T-cell (primary cell): ENCODE measurements at regions of chr5 and their contacts with region 1.

Region 1: GRCh38 chr5:146448783-146449519 is 1.8 kb downstream of the TCERG1 start:
- DNase-seq: no peak
- ATAC-seq: no peak
- H3K4me3 ChIP-seq: no peak overlapping the region
- H3K4me3 Mint-ChIP-seq: peak overlapping the region; percentile 96 to 100 (median 99)
- H3K27ac ChIP-seq: no peak overlapping the region
- H3K27ac Mint-ChIP-seq: peak overlapping the region in 1 of 2 donors; percentile 39
- H3K4me1 ChIP-seq: peaks cover 17 to 19% of the 10 kb centered on the region in 2 experiments
- H3K4me1 Mint-ChIP-seq: peaks cover 54 to 58% (median 55%) of the 10 kb centered on the region in 3 donors
- H3K27me3 ChIP-seq: no peaks in the 10 kb centered on the region
- H3K27me3 Mint-ChIP-seq: no peaks in the 10 kb centered on the region

Region 2: GRCh38 chr5:145975361-145976066 is 473.4 kb before region 1 on chr5:
- CTCF ChIA-PET with region 1: no interaction called
- POLR2A ChIA-PET with region 1: no interaction called
- DNase-seq: no peak
- ATAC-seq: no peak
- H3K4me3 ChIP-seq: no peak overlapping the region
- H3K4me3 Mint-ChIP-seq: no peak overlapping the region
- H3K27ac ChIP-seq: no peak overlapping the region
- H3K27ac Mint-ChIP-seq: no peak overlapping the region
- H3K4me1 ChIP-seq: no peaks in the 10 kb centered on the region
- H3K4me1 Mint-ChIP-seq: no peaks in the 10 kb centered on the region
- H3K27me3 ChIP-seq: no peaks in the 10 kb centered on the region
- H3K27me3 Mint-ChIP-seq: peaks cover 0 to 2% of the 10 kb centered on the region in 2 donors

Region 3: GRCh38 chr5:146290318-146290717 is 158.6 kb before region 1 on chr5:
- CTCF ChIA-PET with region 1: no interaction called
- POLR2A ChIA-PET with region 1: interaction called in 1 of 2 experiments, 11 read pairs
- DNase-seq: no peak
- ATAC-seq: no peak
- H3K4me3 ChIP-seq: no peak overlapping the region
- H3K4me3 Mint-ChIP-seq: no peak overlapping the region
- H3K27ac ChIP-seq: no peak overlapping the region
- H3K27ac Mint-ChIP-seq: peak overlapping the region in 1 of 2 donors; percentile 23
- H3K4me1 ChIP-seq: no peaks in the 10 kb centered on the region
- H3K4me1 Mint-ChIP-seq: no peaks in the 10 kb centered on the region
- H3K27me3 ChIP-seq: no peaks in the 10 kb centered on the region
- H3K27me3 Mint-ChIP-seq: no peaks in the 10 kb centered on the region